HCT116 (cell line): ENCODE measurements at regions of chrX and their contacts with region 1.

Region 1: DNA sequence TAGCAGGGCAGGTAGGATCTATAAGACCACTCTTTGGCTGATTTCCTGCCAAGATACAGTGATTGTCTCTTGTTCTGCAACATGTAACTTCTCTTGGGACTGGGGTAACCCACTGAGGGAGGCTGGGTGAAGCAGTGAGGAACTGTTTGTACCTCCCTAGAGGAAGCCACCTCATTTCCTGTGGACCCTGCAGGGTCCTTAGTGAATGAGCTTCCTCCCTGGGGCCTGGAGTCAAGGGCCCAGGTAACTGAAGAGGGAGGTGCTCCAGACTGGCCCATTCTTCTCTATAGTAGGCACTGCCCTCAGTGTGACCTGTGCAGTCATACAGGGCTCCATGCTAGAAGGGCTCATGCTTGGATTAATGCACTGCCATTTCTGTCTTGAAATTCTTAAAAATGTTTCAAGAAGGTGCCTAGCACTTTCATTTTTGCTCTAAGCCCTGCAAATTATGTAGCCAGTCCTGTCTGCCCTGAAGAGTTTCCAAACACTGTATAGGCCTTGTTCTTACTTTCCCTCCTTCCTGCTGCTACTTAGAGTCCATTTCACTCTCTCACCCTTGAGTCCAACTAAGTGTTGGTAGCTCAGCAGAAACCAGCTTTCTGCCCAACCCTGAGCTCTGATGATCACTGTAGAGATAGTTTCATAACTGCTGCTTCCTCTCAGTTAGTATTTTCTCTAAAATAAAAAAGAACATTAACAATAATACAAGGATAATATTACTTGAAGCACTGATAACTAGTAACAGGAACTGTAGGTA is 8.5 kb upstream of the GRIA3 start:
- DNase-seq: no peak
- ATAC-seq: no peak
- H3K4me3 ChIP-seq: no peak overlapping the region
- H3K27ac ChIP-seq: no peak overlapping the region
- H3K4me1 ChIP-seq: no peaks in the 10 kb centered on the region
- H3K27me3 ChIP-seq: no peaks in the 10 kb centered on the region
- CTCF ChIP-seq: no peak
- POLR2A ChIP-seq: no peak
- RAD21 ChIP-seq: no peak

Region 2: GRCh38 chrX:123422877-123423276 is 247.3 kb after region 1 on chrX:
- CTCF ChIA-PET with region 1: no interaction called
- POLR2A ChIA-PET with region 1: no interaction called
- RAD21 ChIA-PET with region 1: no interaction called
- intact Hi-C with region 1: loop called (anchors 5 kb)
- DNase-seq: no peak
- ATAC-seq: peak; percentile 67; the same call in 1 of the 2 replicates
- H3K4me3 ChIP-seq: no peak overlapping the region
- H3K27ac ChIP-seq: no peak overlapping the region
- H3K4me1 ChIP-seq: peaks cover 3 to 4% of the 10 kb centered on the region in 2 experiments; a peak in 1 of 4 replicates
- H3K27me3 ChIP-seq: no peaks in the 10 kb centered on the region
- CTCF ChIP-seq: peak; percentile 34 to 67 (median 63); a peak in 5 of 6 replicates
- POLR2A ChIP-seq: no peak
- RAD21 ChIP-seq: peak; percentile 46; the same call in 1 of the 2 replicates